ENCODE measurements at regions of chr2 and their contacts with region 1.

Region 1: DNA sequence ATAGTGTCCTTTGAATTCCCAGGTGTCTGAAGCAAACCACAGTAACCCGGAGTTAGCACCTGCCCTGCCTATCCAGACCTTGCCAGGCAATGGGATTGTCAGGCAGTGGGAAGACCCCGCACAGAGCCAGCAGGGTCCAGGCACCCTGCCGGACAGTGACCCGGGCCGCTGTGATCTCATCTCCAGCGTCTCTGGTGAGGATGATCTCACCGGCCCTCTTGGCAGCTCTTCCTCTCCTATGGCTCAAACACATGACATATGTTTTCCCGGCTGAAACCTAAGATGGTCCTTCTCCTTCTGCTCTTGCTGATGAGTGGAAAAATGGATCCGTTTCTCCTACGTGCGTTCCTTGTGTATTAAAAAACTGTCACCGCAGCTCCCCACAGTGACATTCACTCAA is 75.1 kb downstream of the ACOXL start:
- DNase-seq: no peak
- H3K4me3 ChIP-seq: no peak overlapping the region
- H3K4me3 Mint-ChIP-seq: no peak overlapping the region
- H3K27ac ChIP-seq: no peak overlapping the region
- H3K27ac Mint-ChIP-seq: no peak overlapping the region
- H3K4me1 ChIP-seq: peaks cover 19% of the 10 kb centered on the region
- H3K4me1 Mint-ChIP-seq: peaks cover 13 to 24% (median 16%) of the 10 kb centered on the region in 4 donors
- H3K27me3 ChIP-seq: no peaks in the 10 kb centered on the region
- H3K27me3 Mint-ChIP-seq: peaks cover 2 to 6% of the 10 kb centered on the region in 2 donors

Region 2: GRCh38 chr2:110853507-110853906 is 46.0 kb after region 1 on chr2:
- CTCF ChIA-PET with region 1: interaction called, 49 read pairs
- POLR2A ChIA-PET with region 1: no interaction called
- intact Hi-C with region 1: loop called (anchors 1 kb)
- DNase-seq: peak; percentile 39 to 61 (median 44)
- H3K4me3 ChIP-seq: no peak overlapping the region
- H3K4me3 Mint-ChIP-seq: peak overlapping the region in 6 of 8 donors; percentile 4 to 81 (median 68)
- H3K27ac ChIP-seq: no peak overlapping the region
- H3K27ac Mint-ChIP-seq: peak overlapping the region; percentile 53 to 96 (median 78)
- H3K4me1 ChIP-seq: peaks cover 39% of the 10 kb centered on the region
- H3K4me1 Mint-ChIP-seq: peaks cover 33 to 53% (median 42%) of the 10 kb centered on the region in 4 donors
- H3K27me3 ChIP-seq: no peaks in the 10 kb centered on the region
- H3K27me3 Mint-ChIP-seq: no peaks in the 10 kb centered on the region

Measured in CD4-positive, alpha-beta memory T cell (primary cell).